Activated B cell treated with CpG ODN at 0.5 μM for 24 hours (primary cell): ENCODE measurements at regions of chr14 and their contacts with region 1.

Region 1: DNA sequence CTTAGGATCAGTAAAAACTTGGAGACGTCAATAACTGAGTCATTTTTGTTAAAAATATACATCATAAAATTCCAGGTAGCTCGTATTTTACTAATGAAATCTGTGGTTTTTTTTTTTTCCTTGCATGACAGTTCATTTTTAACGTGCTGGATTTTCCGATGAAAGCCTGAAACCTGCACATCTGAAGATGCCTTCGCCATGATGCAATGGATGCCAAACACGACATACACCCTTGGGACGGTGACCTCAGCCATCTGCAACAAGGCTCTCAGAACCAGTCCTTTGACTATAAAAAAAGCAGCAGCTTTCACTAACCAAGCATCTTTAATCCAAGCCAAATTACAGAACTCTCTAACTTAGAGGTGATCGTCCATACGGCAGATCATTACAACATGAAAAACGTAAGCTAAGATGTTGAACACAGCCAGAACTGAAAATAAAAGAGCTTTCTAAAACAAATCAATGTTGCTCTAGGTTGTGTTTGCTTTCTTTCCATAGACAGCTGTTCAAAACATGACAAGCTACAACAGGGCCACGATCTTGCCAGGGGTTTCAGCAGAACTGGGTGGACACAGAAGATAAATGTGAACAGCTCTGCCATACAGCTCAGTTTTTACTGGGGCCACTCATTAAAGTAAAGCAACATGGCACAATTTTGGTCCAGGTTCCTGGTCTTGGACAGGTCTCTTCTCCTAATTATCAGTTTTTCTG is 7.8 kb downstream of the NIN start:
- DNase-seq: no peak
- ATAC-seq: peak; percentile 32
- H3K4me3 Mint-ChIP-seq: peak overlapping the region; percentile 81
- H3K27ac Mint-ChIP-seq: peak overlapping the region; percentile 97
- H3K4me1 Mint-ChIP-seq: peaks cover 95% of the 10 kb centered on the region
- H3K27me3 Mint-ChIP-seq: no peaks in the 10 kb centered on the region
- CTCF ChIP-seq: no peak

Region 2: DNA sequence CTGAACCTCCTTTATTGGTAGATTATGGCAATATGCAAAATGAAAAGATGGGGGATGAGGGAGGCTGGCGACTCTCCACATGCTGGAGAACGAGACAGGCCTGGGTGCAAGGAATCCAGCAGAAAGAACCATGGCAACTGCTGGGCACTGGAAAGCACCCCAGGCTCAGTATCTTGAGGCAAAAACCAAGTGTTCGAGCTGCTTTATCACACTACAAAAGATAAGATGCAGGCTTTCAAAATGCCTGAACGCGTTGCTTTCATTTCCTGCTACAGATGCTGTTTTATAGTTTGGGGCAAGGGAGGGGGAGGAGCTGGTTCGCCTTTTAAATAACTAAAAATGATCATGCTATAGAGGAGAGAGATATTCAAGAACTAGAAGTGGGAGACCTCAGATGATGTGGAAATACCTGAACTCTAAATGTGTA is 31.1 kb before region 1 on chr14:
- CTCF ChIA-PET with region 1: interaction called, 47 read pairs
- POLR2A ChIA-PET with region 1: interaction called, 143 read pairs
- intact Hi-C with region 1: loop called (anchors 1 kb)
- DNase-seq: no peak
- ATAC-seq: peak; percentile 43
- H3K4me3 Mint-ChIP-seq: peak overlapping the region; percentile 66
- H3K27ac Mint-ChIP-seq: peak overlapping the region; percentile 92
- H3K4me1 Mint-ChIP-seq: peaks cover 98% of the 10 kb centered on the region
- H3K27me3 Mint-ChIP-seq: no peaks in the 10 kb centered on the region
- CTCF ChIP-seq: no peak

Region 3: GRCh38 chr14:50978888-50979287 is 155.7 kb after region 1 on chr14:
- CTCF ChIA-PET with region 1: no interaction called
- POLR2A ChIA-PET with region 1: no interaction called
- intact Hi-C with region 1: no loop called
- DNase-seq: no peak
- ATAC-seq: peak; percentile 49
- H3K4me3 Mint-ChIP-seq: no peak overlapping the region
- H3K27ac Mint-ChIP-seq: no peak overlapping the region
- H3K4me1 Mint-ChIP-seq: peaks cover 19% of the 10 kb centered on the region
- H3K27me3 Mint-ChIP-seq: peaks cover 4% of the 10 kb centered on the region
- CTCF ChIP-seq: no peak